Motor neuron (in vitro differentiated cells): ENCODE measurements at regions of chr11 and their contacts with region 1.

Region 1: DNA sequence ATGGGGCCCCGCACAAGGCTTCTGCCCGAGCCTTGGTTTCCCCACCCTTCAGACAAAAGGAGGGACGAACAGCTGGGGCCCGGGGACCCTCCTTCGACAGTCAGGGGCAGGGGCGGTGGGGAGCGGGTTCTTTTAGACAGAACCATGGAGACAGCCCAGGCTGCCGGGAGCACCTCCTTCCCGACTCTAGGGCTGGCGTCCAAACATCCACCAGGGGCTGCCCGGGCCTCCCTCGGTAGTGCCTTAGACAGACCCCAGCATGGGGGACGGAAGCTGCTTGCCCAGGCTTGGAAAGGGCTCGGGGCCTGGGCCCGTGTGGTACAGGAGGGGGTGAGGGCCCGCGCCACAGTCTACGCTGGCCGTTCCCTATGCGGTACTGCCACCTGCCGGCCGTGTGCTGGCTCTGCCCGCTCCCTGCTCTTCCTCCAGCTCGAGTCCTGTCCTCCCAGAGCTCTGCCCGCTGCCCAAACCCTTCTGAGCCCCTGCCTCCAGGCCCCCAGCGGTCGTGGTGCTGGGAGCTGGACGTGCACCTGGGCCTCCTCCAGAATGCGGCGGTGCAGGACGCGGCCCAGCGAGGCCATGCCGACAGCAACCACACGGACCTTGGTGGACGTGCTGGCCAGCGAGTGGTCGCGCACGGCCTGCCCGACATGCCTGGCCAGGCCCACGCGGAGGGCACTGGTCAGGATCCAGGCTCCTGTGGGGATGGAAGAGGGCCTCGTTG is 20.1 kb downstream of the TSSC4 start:
- ATAC-seq: peak; percentile 94 to 98 (median 95)
- H3K4me3 ChIP-seq: no peak overlapping the region
- H3K27ac ChIP-seq: peak overlapping the region in 1 of 2 donors; percentile 34
- H3K4me1 ChIP-seq: peaks cover 9 to 11% of the 10 kb centered on the region in 2 donors

Region 2: GRCh38 chr11:2196970-2197770 is 223.5 kb before region 1 on chr11:
- in situ Hi-C with region 1: loop called (anchors 10 to 25 kb)
- ATAC-seq: peak; percentile 66 to 88 (median 84)
- H3K4me3 ChIP-seq: no peak overlapping the region
- H3K27ac ChIP-seq: no peak overlapping the region
- H3K4me1 ChIP-seq: peaks cover 0 to 5% of the 10 kb centered on the region in 2 donors

Region 3: GRCh38 chr11:2892215-2893020 is 471.8 kb after region 1 on chr11:
- in situ Hi-C with region 1: loop called in 4 of 9 experiments (anchors 10 to 25 kb)
- ATAC-seq: peak; percentile 33 to 79 (median 72)
- H3K4me3 ChIP-seq: peak overlapping the region in 4 of 5 donors; percentile 4 to 28 (median 19)
- H3K27ac ChIP-seq: peak overlapping the region in 1 of 2 donors; percentile 29
- H3K4me1 ChIP-seq: peaks cover 12 to 17% of the 10 kb centered on the region in 2 donors